GM23248 (cell line): ENCODE measurements at regions of chr3 and their contacts with region 1.

Region 1: DNA sequence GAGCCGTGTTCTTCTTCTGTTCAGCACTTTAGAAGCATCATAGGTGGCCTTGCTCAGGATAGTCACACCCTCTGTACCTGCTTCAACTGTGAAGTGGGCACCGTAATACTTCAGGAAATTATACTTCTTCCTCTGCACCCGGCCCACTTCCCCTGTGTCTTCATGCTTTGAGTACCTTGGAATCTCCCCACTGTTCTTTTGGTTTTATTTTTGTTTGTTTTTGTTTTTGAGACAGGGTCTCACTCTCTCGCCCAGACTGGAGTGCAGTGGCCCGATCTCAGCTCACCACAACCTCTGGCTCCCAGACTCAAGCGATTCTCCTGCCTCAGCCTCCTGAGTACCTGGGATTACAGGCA is 1.7 kb downstream of the P2RY14 start:
- DNase-seq: no peak
- H3K4me3 ChIP-seq: no peak overlapping the region
- H3K27ac ChIP-seq: no peak overlapping the region
- H3K4me1 ChIP-seq: no peaks in the 10 kb centered on the region
- H3K27me3 ChIP-seq: no peaks in the 10 kb centered on the region

Region 2: GRCh38 chr3:151227807-151228665 is 48.6 kb before region 1 on chr3:
- in situ Hi-C with region 1: loop called (anchors 5 kb)
- DNase-seq: peak; percentile 80
- H3K4me3 ChIP-seq: no peak overlapping the region
- H3K27ac ChIP-seq: peak overlapping the region; percentile 60
- H3K4me1 ChIP-seq: peaks cover 36% of the 10 kb centered on the region
- H3K27me3 ChIP-seq: no peaks in the 10 kb centered on the region